Heart right ventricle (tissue), 16 donors: ENCODE measurements at regions of chr3 and their contacts with region 1.

Region 1: GRCh38 chr3:52014613-52015012 is 18.9 kb upstream of the RPL29 start:
- DNase-seq: no peak
- ATAC-seq: no peak
- H3K4me3 ChIP-seq: no peak overlapping the region
- H3K27ac ChIP-seq: no peak overlapping the region
- H3K4me1 ChIP-seq: peaks cover 18 to 63% (median 42%) of the 10 kb centered on the region in 9 donors
- H3K27me3 ChIP-seq: no peaks in the 10 kb centered on the region
- CTCF ChIP-seq: peak in 2 of 9 donors; percentile 13 to 31

Region 2: GRCh38 chr3:51799879-51800749 is 214.5 kb before region 1 on chr3:
- intact Hi-C with region 1: no loop called
- DNase-seq: peak in 1 of 2 donors; percentile 33
- ATAC-seq: peak in 5 of 8 donors; percentile 57 to 71 (median 69)
- H3K4me3 ChIP-seq: no peak overlapping the region
- H3K27ac ChIP-seq: no peak overlapping the region
- H3K4me1 ChIP-seq: peaks cover 0 to 5% (median 0%) of the 10 kb centered on the region in 9 donors
- H3K27me3 ChIP-seq: peaks cover 0 to 49% (median 31%) of the 10 kb centered on the region in 7 donors
- CTCF ChIP-seq: peak; percentile 63 to 87 (median 81)

Region 3: GRCh38 chr3:52046186-52046913 is 31.7 kb after region 1 on chr3:
- intact Hi-C with region 1: loop called in 2 of 10 experiments (anchors 5 kb)
- DNase-seq: peak in 1 of 2 donors; percentile 29
- ATAC-seq: peak; percentile 25 to 79 (median 58)
- H3K4me3 ChIP-seq: no peak overlapping the region
- H3K27ac ChIP-seq: peak overlapping the region; percentile 18 to 83 (median 66)
- H3K4me1 ChIP-seq: peaks cover 24 to 65% (median 58%) of the 10 kb centered on the region in 9 donors
- H3K27me3 ChIP-seq: no peaks in the 10 kb centered on the region
- CTCF ChIP-seq: no peak

Region 4: DNA sequence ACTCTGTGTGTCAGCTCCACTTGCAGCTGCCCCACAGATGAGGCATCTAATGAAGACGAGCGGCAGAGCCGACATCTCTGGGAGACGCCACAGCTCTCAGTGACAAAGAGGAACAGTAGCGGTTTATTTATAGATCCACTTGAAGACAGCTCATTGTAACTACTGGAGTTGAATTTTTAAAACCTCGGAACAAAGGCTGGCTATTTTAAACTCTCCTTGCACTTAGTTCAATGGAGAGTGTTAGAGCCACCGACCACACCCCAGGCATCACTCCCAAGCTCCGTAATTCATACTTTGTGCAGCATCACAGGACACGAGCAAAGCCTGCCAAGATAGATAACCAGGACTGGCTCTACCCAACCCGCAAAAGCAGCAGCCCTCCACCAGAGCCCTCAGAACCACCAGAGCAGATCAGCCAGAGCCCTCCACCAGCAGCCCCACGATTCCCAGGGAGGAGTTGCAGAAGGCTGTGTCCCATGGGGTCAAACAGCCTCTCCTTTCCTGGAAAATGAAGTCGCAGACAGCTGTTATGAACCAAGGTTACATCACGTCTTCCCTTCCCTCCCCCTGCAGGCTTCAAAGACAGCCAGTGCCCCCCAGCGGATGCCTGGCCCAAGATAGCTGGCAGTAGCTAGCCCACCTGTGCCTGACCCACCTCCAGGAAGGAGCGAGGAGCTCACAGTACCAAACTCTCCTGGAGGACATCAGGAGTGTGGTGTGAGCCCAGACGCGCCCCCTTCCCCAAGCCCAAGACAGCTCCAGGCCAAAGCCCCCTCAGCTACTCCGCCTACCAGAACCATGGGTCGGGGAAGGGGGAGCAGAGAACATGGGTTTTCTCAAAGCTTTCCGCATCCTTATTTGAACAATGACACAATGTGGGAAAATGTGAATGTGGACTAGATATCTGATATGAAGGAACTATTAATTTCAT is 94.0 kb after region 1 on chr3:
- intact Hi-C with region 1: loop called in 1 of 10 experiments (anchors 5 kb)
- DNase-seq: peak; percentile 51 to 79
- ATAC-seq: peak; percentile 71 to 92 (median 83)
- H3K4me3 ChIP-seq: peak overlapping the region in 5 of 10 donors; percentile 18 to 38 (median 29)
- H3K27ac ChIP-seq: peak overlapping the region; percentile 21 to 85 (median 70)
- H3K4me1 ChIP-seq: peaks cover 0 to 46% (median 39%) of the 10 kb centered on the region in 9 donors
- H3K27me3 ChIP-seq: no peaks in the 10 kb centered on the region
- CTCF ChIP-seq: peak in 8 of 9 donors; percentile 27 to 74 (median 56)

Region 5: DNA sequence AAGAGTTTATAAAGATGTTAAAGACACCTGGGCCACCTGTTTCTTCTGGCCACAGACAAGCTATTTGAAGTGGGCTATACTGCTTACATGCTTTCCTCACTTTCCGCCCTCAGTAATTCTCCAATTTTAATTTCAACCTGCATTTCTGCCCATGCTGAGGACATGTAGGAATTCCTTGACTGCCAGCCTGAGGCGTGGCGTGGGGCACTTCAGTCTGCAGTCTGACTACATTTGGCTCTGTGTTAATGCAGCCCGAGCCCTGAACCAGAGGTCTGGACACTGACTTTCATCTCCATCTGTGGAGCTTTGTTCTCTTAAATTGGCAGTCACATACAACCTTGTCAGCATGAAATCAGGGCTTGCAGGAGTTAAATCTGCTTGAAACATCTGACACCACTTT is 530.3 kb after region 1 on chr3:
- intact Hi-C with region 1: loop called in 1 of 10 experiments (anchors 5 kb)
- DNase-seq: no peak
- ATAC-seq: peak in 4 of 8 donors; percentile 29 to 59 (median 49)
- H3K4me3 ChIP-seq: no peak overlapping the region
- H3K27ac ChIP-seq: peak overlapping the region in 2 of 10 donors; percentile 1 to 18
- H3K4me1 ChIP-seq: peaks cover 0 to 33% (median 12%) of the 10 kb centered on the region in 9 donors
- H3K27me3 ChIP-seq: no peaks in the 10 kb centered on the region
- CTCF ChIP-seq: no peak